B cell (primary cell): ENCODE measurements at regions of chr9 and their contacts with region 1.

Region 1: DNA sequence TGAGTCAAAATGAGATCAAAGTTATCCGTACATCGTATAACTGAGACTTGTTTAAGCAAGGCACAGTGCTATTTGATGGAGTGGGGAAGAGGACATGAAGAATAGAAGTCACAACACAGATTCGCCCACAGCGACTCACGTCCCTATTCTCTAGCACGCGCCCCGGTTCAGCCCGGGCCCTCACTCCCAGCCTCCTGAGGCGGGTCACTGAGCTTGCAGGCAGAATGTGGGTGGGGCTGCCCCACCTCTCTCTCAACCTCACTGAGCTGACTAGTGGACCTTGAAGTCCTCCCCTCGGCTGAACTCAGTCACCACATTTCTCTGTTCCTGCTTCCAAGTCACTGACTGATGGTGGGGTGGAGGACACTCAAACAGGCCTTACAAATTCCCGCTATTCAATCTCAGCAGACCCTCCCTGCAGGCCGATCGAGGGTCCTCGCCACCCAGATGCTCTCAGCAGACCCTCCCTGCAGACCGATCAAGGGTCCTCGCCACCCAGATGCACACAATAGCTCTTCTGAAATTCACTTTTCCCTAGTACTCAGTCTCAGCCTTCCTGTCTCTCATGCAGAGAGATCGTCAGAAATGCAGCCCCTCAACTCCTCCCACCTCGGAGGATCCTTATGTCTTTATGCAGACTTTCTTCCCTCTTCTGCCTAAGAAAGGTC is 12.9 kb downstream of the GLDC start:
- DNase-seq: peak; percentile 81
- ATAC-seq: peak; percentile 83
- H3K4me3 ChIP-seq: no peak overlapping the region
- H3K4me3 Mint-ChIP-seq: peak overlapping the region; percentile 35
- H3K27ac ChIP-seq: no peak overlapping the region
- H3K27ac Mint-ChIP-seq: peak overlapping the region; percentile 47
- H3K4me1 ChIP-seq: peaks cover 28 to 32% of the 10 kb centered on the region in 2 donors
- H3K4me1 Mint-ChIP-seq: peaks cover 33% of the 10 kb centered on the region
- H3K27me3 ChIP-seq: no peaks in the 10 kb centered on the region
- H3K27me3 Mint-ChIP-seq: peaks cover 6% of the 10 kb centered on the region
- CTCF ChIP-seq: no peak

Region 2: DNA sequence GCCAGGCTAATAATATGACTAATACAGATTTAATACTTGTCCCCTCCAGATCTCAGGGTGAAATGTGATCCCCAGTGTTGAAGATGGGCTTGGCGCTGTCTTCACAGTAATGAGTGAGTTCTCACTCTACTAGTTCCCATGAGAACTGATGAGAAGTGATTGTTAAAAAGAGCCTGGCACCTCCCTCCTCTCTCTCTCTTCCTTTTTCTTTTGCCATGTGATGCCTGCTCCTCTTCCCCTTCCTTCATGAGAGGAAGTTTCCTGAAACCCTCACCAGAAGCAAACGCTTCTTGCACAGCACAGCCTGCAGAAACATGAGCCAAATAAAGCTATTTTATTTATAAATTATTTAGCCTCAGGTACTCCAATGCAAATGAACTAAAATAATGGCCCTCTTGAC is 42.3 kb before region 1 on chr9:
- CTCF ChIA-PET with region 1: interaction called, 5 read pairs
- POLR2A ChIA-PET with region 1: no interaction called
- intact Hi-C with region 1: loop called (anchors 5 kb)
- DNase-seq: peak; percentile 28
- ATAC-seq: peak; percentile 31
- H3K4me3 ChIP-seq: no peak overlapping the region
- H3K4me3 Mint-ChIP-seq: peak overlapping the region; percentile 15
- H3K27ac ChIP-seq: no peak overlapping the region
- H3K27ac Mint-ChIP-seq: no peak overlapping the region
- H3K4me1 ChIP-seq: peaks cover 3 to 7% of the 10 kb centered on the region in 2 donors
- H3K4me1 Mint-ChIP-seq: peaks cover 17% of the 10 kb centered on the region
- H3K27me3 ChIP-seq: no peaks in the 10 kb centered on the region
- H3K27me3 Mint-ChIP-seq: no peaks in the 10 kb centered on the region
- CTCF ChIP-seq: no peak

Region 3: DNA sequence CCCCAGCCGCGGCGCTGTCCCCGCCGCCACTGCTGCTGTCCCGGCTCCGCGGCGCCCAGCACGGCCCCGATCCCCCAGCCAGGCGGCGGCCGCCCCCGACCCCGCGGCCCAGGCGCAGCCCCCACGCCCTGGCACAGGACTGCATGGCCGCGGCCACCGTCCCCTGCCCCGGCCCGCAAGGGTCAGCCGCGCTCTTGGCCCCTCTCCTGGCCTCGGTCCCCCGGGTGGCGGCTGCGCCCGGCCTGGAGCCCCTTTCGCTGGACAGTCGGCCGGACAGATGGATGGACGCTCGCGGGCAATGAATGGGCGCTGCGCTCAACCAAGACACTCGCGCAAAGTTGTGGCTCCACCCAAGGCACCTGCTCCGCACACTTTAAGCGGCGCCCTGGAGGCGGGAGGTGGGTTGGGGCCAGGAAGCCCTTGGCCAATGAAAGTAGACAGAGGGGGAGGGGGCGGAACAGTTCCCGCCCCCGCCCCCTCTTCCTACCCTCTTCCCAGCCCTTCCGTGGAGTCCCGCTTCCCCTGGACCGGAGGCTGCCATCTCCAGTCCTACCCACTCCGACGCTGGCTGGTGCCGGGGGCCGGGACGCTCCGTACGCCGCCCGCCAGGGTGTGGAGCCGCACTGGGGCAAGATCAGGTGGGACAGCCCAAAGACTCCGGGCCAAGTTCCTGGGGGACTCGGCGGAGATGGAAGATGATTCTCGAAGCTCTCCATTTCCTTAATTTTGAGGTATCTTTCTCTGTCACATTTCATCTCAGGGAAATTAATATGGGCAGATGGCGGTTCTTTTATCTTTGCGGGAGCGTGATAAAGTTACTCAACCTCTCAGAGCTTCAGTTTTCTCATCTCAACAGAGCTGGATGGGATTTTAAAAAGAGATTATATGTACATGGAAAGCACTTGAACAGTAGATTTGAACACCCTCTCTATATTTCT is 13.0 kb after region 1 on chr9 and contains the start of gene GLDC:
- CTCF ChIA-PET with region 1: no interaction called
- POLR2A ChIA-PET with region 1: no interaction called
- intact Hi-C with region 1: loop called (anchors 2 kb)
- DNase-seq: peak; percentile 69
- ATAC-seq: peak; percentile 79
- H3K4me3 ChIP-seq: peak within 1 kb of the TSS; percentile 44 to 62 (median 57)
- H3K4me3 Mint-ChIP-seq: peak within 1 kb of the TSS; percentile 90
- H3K27ac ChIP-seq: no peak within 1 kb of the TSS
- H3K27ac Mint-ChIP-seq: peak within 1 kb of the TSS; percentile 41
- H3K4me1 ChIP-seq: peaks cover 21 to 23% of the 10 kb centered on the region in 2 donors
- H3K4me1 Mint-ChIP-seq: peaks cover 24% of the 10 kb centered on the region
- H3K27me3 ChIP-seq: peaks cover 0 to 43% (median 24%) of the 10 kb centered on the region in 4 experiments
- H3K27me3 Mint-ChIP-seq: peaks cover 52% of the 10 kb centered on the region
- CTCF ChIP-seq: no peak
- total RNA-seq, gene GLDC: 0.71 and 1.1 TPM in 2 replicates